ENCODE measurements at regions of chr20 and their contacts with region 1.

Region 1: GRCh38 chr20:49330544-49331239 is 52.8 kb upstream of the ZNFX1 start:
- DNase-seq: no peak
- H3K4me3 Mint-ChIP-seq: no peak overlapping the region
- H3K27ac Mint-ChIP-seq: no peak overlapping the region
- H3K4me1 Mint-ChIP-seq: no peaks in the 10 kb centered on the region
- H3K27me3 Mint-ChIP-seq: peaks cover 13% of the 10 kb centered on the region

Region 2: GRCh38 chr20:49484180-49485140 is 153.8 kb after region 1 on chr20:
- CTCF ChIA-PET with region 1: interaction called, 31 read pairs
- intact Hi-C with region 1: loop called (anchors 1 kb)
- DNase-seq: peak; percentile 77
- H3K4me3 Mint-ChIP-seq: peak overlapping the region; percentile 58
- H3K27ac Mint-ChIP-seq: no peak overlapping the region
- H3K4me1 Mint-ChIP-seq: peaks cover 4% of the 10 kb centered on the region
- H3K27me3 Mint-ChIP-seq: peaks cover 55% of the 10 kb centered on the region

Region 3: DNA sequence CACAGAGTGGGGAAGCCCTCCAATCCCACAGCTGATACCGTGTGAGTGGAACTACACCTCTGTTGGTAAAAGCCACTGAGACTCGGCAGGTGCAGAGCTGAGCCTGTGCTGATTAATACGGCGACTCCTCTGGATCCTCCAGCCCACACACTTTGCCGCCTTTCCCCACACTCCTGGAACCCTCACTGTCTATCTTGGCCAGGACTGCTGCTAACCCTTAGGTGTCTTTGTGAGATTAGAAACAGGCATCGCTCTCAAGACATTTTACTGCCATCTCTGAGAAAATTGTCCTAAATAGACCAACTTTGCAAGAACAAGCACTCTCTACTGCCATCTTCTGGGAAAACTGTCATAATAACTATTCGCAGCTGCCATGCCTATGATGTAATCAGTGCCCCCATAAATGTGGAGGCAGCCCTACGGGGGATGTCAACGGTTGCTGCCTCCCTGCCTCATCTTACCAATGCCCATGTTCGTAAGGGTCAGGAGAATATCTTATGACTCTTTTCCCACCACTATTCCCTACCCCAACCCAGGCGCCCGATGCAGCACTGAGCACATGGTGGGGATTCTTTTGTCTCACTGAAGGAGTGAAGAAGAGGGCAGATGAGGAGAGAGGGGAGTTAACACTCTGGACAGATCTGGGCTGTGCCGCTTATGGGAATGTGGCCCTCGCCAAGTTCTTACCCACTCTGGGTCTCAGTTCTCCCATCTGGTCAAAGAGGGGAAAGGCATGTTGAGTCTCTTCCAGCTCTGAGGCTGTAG is 177.9 kb after region 1 on chr20:
- CTCF ChIA-PET with region 1: interaction called, 12 read pairs
- intact Hi-C with region 1: loop called (anchors 1 kb)
- DNase-seq: no peak
- H3K4me3 Mint-ChIP-seq: no peak overlapping the region
- H3K27ac Mint-ChIP-seq: no peak overlapping the region
- H3K4me1 Mint-ChIP-seq: no peaks in the 10 kb centered on the region
- H3K27me3 Mint-ChIP-seq: peaks cover 16% of the 10 kb centered on the region